Posterior vena cava (tissue), 2 donors: ENCODE measurements at regions of chr19 and their contacts with region 1.

Region 1: DNA sequence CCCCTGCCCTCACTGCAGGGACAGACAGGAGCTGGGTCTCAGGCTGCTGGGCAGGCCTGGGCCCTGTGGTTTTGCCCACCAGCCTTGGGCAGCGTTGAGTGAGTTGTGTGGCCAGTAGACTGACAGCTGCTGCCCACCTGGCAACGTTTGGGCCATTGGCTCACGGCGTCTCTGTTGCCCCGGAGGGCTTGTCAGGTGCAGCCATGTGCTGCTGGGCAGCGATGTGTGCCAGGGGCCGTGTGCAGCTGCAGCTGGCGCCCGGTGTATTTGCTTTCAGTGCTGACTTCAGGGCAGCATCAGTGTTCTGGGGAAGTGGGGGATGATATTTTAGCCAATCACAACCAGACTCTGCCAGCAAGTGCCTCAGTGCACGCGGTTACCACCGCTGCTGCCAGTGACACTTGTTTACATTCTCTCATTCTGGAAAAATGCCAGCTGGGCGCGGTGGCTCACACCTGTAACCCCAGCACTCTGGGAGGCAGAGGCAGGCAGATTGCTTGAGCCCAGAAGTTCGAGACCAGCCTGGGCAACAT is 10.6 kb downstream of the FZR1 start:
- DNase-seq: no peak

Region 2: DNA sequence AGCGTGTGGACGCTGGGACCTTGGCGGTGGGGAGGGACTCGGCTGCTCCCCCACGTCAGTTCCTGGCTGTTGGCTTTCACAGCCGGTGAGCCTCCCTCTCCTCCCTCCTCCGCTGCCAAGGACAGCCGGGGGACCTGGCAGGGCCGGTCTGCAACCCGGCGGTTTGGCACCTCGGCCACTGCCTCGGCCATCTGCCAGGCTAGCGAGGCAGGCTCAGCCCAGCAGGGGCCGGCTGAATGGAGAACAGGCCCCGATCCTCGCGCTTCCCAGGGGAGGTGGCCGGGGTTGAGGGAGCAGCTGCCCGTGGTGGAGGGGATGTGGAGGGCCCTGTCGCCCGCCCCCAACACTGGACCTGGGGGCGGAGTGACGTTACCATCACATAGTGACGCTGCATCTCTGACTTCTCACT is 459.4 kb before region 1 on chr19:
- intact Hi-C with region 1: no loop called
- DNase-seq: peak; percentile 96

Region 3: DNA sequence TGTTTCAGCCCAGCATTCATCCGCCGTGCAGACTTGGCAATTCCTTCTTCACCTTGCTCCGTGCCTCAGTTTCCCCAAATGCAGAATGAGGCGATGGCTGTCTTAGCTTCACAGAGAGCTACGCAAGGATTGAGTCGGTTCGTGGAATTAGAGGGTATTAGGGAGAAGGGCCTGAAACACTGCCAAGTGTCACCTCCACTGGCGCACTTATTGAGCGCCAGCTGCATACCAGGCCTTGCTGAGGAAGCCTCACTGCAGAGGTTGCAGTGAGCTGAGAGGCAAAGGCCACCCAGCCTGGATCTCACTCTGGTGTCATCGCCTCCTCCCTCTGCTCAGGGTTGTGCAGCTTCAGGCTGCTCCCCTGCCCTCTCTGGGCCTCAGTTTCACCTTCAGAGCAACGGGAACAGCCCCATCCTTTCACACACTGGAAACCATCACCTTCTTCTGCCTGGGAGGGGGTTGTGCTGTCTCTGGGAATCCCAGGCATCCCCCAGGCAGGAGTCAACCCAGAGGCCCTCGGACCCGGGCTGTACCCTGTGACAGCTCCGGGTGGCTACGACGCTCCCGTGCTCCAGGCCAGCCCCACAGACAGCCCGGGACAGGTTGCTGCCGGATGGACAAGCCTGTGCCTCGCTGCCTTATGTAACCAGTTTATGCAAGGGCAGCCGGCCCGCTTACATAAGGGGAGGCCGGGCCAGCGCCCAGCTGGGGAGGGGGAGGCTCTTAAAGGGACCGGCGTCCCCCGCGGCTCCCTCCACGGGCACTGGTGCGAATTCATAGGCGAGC is 118.4 kb before region 1 on chr19:
- intact Hi-C with region 1: no loop called
- DNase-seq: peak; percentile 88

Region 4: DNA sequence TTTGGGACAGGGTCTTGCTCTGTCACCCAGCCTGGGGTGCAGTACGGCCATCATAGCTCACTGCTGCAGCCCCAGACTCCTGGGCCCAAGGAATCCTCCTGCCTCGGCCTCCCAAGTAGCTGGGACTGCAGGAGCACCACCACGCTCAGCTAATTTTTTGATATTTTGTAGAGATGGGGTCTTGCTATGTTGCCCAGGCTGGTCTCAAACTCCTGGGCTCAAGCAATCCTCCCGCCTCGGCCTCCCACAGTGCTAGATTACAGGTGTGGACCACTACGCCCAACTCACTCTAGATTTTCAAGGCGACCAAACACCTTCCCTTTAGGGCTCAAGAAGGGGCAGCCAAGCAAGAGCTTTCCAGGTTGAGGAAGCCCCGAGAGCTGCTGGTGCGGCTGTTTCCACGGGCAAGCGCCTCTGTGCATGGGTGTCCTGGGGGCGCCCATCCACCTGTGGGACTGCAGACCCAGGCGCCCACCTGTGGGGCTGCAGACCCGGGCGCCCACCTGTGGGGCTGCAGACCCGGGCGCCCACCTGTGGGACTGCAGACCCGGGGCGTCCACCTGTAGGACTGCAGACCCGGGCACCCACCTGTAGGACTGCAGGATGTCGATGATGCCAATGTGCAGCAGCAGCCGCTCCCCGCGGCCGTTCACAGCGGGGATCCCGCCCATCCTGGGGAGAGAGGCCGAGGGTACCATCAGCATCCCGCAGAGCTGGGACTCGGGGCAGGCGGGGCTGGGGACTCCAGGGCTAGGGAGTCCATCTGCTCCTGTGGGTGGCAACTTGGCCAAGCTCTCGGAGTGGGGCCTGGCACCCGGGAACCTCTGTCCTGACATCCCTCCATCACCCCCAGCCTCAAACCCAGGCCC is 131.5 kb after region 1 on chr19:
- intact Hi-C with region 1: loop called in 1 of 2 experiments (anchors 1 kb)
- DNase-seq: no peak